Heart left ventricle (tissue), 16 donors: ENCODE measurements at regions of chr20 and their contacts with region 1.

Region 1: DNA sequence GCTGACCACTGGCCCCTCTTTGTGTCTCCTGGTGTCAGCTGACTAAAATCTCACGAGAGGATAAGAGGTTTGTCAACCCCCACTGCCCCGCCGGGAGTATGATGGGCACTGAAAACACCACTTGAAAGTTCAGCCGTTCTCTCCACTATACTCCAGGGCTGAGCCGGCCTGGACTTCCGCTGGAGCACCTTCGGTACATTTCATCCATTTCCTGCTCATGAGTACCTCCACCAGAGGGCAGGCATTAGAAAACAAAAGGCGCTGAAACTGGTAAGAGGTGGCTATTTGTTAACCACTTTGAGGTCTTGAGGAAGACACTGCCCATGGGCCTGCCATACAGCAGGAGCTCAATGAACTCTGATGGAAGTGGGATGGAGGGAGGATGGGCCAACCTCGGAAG is 17.9 kb upstream of the ANKRD60 start:
- DNase-seq: no peak
- ATAC-seq: peak in 1 of 4 donors; percentile 16
- H3K4me3 ChIP-seq: no peak overlapping the region
- H3K27ac ChIP-seq: no peak overlapping the region
- H3K4me1 ChIP-seq: no peaks in the 10 kb centered on the region
- H3K27me3 ChIP-seq: no peaks in the 10 kb centered on the region
- CTCF ChIP-seq: peak in 8 of 12 donors; percentile 10 to 33 (median 24)
- POLR2A ChIP-seq: no peak

Region 2: DNA sequence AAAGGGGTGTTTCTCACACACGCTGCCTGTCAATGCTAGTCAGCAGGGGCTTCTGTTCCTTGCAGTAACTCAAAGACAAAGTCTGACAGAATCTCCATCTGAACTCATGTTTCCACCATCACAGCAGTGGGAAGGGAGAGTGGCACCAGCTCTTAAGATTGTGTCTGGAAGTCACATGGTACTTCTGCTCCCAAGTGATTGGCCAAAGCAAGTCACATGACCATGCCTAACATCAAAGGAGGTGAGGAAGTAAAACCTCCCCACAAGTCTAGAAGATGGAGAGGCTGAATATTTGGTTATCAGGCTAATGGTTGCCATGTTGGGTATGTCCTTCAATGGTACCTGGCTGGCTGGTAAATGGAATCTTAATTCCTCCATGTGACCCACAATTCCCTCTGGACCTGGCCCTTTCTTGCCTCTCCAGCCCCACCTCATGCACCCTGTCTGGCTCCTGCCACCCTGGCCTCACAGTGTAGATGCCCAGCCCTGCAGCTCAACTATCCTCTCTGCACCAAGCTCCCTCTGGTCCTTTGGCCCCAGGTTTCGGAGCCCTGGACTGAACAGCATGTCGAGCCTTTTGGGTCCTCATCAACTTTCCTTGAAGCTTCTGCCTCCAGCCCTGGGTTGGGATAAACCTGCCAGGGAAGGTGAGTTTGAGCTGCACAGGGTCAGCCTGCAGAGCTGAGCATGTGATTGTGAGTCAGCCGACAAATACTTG is 485.5 kb before region 1 on chr20:
- intact Hi-C with region 1: no loop called
- DNase-seq: no peak
- ATAC-seq: no peak
- H3K4me3 ChIP-seq: no peak overlapping the region
- H3K27ac ChIP-seq: no peak overlapping the region
- H3K4me1 ChIP-seq: no peaks in the 10 kb centered on the region
- H3K27me3 ChIP-seq: no peaks in the 10 kb centered on the region
- CTCF ChIP-seq: no peak
- POLR2A ChIP-seq: no peak

Region 3: GRCh38 chr20:58065508-58066361 is 180.6 kb before region 1 on chr20:
- intact Hi-C with region 1: no loop called
- DNase-seq: no peak
- ATAC-seq: no peak
- H3K4me3 ChIP-seq: no peak overlapping the region
- H3K27ac ChIP-seq: no peak overlapping the region
- H3K4me1 ChIP-seq: no peaks in the 10 kb centered on the region
- H3K27me3 ChIP-seq: peaks cover 0 to 7% (median 0%) of the 10 kb centered on the region in 9 donors
- CTCF ChIP-seq: no peak
- POLR2A ChIP-seq: no peak

Region 4: DNA sequence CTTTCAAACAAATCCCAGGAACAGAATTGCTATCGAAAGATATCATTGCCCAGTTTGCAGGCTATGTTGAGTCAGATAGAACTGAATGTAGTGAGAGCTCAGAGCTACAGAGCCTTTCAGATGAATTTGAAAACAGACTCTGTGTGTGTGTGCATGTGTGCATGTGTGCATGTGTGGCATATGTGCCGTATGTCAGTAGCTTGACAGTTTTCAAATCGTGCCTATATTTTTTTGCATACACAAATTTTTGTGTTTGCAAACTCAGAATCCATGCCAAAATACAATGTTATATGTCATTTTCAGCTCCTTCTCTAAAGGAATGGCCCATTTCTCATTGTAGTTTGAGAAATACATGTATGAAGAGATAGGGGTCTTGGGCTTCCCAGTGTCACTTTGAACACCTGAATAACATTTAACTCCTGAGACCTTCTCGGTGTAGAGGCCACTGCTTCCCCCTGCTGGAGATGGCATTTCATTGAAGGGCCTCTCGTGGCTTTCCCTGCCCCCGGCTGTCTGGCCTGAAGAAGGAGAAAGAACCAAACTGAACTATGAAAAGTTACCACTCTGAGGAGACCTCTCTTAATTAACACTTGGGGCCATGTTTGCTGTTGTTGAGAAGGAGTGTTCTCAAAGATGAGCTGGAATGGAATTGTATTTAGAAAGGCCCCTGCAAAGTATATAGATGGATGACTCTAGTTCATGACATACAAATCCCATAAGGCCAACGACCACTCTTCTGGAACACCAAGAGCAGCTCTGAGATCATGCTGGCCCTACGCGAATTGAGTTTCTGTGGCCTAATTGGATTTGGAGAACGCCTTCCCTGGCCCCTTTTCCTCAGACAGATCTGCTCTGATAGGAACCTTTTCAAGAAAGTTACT is 201.4 kb after region 1 on chr20:
- intact Hi-C with region 1: loop called in 2 of 10 experiments (anchors 5 kb)
- DNase-seq: peak in 1 of 5 donors; percentile 42
- ATAC-seq: peak in 3 of 4 donors; percentile 53 to 78 (median 71)
- H3K4me3 ChIP-seq: no peak overlapping the region
- H3K27ac ChIP-seq: no peak overlapping the region
- H3K4me1 ChIP-seq: peaks cover 0 to 8% (median 0%) of the 10 kb centered on the region in 12 donors
- H3K27me3 ChIP-seq: no peaks in the 10 kb centered on the region
- CTCF ChIP-seq: peak; percentile 46 to 65 (median 54)
- POLR2A ChIP-seq: no peak

Region 5: GRCh38 chr20:58839474-58839874 is 593.1 kb after region 1 on chr20:
- intact Hi-C with region 1: loop called in 1 of 10 experiments (anchors 5 kb)
- DNase-seq: no peak
- ATAC-seq: peak in 3 of 4 donors; percentile 59 to 79 (median 66)
- H3K4me3 ChIP-seq: peak overlapping the region in 7 of 12 donors; percentile 6 to 40 (median 17)
- H3K27ac ChIP-seq: no peak overlapping the region
- H3K4me1 ChIP-seq: peaks cover 0 to 16% (median 0%) of the 10 kb centered on the region in 12 donors
- H3K27me3 ChIP-seq: peaks cover 3 to 69% (median 28%) of the 10 kb centered on the region in 9 donors
- CTCF ChIP-seq: peak; percentile 13 to 58 (median 37)
- POLR2A ChIP-seq: no peak

Region 6: GRCh38 chr20:58850693-58851174 is 604.4 kb after region 1 on chr20 and contains the start of gene GNAS-AS1:
- intact Hi-C with region 1: loop called in 1 of 10 experiments (anchors 5 kb)
- DNase-seq: peak; percentile 83 to 91 (median 88)
- ATAC-seq: peak; percentile 79 to 91 (median 88)
- H3K4me3 ChIP-seq: peak within 1 kb of the TSS; percentile 15 to 78 (median 57)
- H3K27ac ChIP-seq: no peak within 1 kb of the TSS
- H3K4me1 ChIP-seq: peaks cover 0 to 27% (median 5%) of the 10 kb centered on the region in 12 donors
- H3K27me3 ChIP-seq: peaks cover 11 to 61% (median 26%) of the 10 kb centered on the region in 9 donors
- CTCF ChIP-seq: peak in 3 of 12 donors; percentile 15 to 23 (median 22)
- POLR2A ChIP-seq: no peak
- total RNA-seq, gene GNAS-AS1: 0.22 to 0.79 (median 0.29) TPM in 7 of 9 donors, not detected in the others